Right ventricle myocardium superior (tissue), 1 donor: ENCODE measurements at regions of chr1 and their contacts with region 1.

Region 1: DNA sequence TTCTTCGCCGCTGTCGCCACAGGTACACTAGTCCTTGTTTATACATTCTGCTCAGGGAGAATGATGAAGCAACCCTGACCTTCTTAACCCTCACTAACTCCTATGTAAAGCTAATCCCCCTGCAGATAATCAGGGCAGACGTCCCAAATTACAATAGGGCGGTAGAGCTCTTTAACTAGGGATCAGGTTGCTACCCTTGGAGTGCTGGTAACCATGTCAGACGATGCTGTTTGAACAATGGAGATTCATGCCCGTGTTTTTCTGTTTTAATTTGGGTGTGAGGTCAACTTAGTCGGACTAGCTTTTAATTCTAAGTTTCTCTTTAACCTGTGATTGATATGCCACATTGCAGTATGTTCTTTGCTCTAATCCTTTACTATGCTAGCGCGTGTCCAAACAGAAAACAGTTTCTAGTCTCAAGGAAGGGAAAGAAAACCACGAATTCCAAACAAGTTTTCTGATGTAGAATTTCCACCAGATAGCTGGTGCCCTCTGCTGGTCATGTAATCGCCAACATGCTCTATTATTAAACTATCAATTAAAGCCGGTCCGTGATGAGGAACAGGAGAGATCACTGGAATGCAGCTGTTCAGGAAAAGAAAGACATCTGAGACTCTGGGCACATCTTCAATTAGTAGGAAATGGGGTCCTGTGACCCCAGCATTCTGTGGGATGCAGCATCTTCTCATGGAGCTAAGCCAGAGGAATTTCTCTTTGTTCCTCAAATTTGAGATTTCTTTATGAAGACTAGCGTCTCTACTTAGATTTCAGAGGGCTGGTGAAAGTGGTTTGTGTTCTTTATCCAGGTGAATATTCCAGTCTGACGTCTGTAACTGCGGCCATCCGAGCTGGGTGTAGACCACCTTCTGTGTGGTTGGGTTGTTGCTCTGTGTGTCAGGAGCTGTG is 18.3 kb upstream of the VAMP3 start:
- DNase-seq: peak; percentile 56
- ATAC-seq: peak; percentile 79

Region 2: GRCh38 chr1:7667625-7668218 is 85.0 kb before region 1 on chr1:
- intact Hi-C with region 1: loop called (anchors 1 kb)
- DNase-seq: peak; percentile 95
- ATAC-seq: peak; percentile 90

Region 3: DNA sequence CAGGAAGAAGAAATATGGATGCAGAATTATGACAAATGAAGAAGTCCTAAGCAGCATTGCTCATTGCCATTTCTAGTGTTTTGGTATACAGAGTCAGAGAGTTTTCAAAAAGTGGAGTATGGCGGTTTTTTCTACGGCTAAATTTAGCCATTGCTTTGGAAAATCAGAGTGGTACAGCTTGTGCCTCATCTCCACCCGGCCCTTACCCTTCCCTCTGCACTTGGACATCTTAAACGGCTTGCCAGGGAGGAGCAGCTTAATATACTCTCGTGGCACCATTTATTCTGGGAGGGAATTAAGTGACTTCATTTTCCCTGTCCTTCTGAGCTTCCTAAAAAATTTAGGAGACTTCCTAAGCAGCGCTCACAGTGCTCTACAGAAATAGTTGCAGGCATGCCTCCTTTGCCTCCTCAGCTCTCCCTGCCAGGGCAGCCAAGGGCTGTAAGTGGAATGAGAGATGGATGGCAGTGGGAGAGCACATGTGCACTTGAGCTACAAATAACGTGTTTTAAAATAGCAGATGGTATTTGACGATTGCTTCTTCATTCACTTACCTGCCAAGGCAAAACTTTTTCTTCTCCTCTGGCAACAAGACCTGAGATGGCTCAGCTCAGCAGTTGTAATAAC is 33.2 kb before region 1 on chr1:
- intact Hi-C with region 1: loop called (anchors 5 kb)
- DNase-seq: peak; percentile 53
- ATAC-seq: peak; percentile 86

Region 4: DNA sequence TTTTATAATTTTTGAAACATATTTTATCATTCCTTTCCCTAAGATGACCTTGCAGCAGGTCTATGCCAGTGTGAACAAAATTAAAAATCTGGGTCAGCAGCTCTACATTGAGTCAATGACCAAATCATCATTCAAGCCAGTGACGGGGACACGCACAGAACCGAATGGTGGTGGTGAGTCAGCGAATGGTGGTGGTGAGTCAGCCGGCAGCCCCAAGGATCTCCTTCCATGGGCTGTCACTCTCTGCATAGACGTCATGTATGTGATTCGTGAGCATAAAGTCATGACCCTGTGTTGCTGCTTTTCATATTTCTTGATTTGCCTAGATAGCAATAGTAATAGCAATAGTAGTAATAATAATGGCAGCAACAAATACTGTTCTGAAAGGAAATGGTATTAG is 57.6 kb after region 1 on chr1:
- intact Hi-C with region 1: no loop called
- DNase-seq: no peak
- ATAC-seq: no peak